Esophagus muscularis mucosa (tissue), 4 donors: ENCODE measurements at regions of chr19 and their contacts with region 1.

Region 1: DNA sequence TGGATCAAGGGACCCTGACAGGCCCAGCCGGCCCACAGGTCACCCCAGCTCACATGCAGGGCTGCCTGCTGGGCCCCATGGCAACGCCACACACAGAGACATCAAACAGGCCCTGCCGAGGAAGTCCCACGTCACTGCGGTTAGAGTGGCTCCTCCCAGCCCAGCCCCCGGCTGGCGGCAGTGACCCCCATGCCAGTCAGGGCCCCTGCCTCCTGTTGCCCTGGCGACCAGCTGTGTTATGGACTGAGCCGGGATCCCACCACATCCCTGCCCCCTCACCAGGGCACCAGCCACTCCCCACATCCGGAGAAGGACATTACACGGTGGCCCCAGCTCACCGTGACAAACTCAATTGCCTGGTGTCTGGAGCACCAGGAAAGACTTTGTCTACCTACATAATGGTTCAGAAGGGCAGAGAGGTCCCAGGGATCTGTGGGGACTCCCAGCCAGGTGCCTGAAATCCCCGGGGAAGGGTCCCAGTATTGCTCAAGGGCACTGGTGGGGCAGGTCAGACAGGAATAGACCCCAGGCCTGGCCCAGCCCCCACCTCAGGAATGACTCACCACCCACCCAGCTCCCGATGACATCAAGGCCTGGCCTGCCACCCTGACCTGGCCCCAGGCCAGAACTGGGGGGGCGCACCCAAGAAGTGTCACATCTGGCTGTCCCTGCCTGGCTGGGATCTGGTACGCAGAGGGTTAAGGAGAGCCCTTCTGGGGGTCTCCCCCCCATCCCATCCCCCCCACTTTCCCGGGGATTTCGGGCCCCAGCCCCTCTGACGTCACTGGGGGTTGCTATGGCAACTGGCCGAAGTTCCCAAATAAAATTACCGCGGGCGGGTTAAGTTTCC is 30.2 kb upstream of the NANOS3 start:
- DNase-seq: peak; percentile 98
- H3K4me3 ChIP-seq: peak overlapping the region; percentile 62 to 71 (median 64)
- H3K27ac ChIP-seq: peak overlapping the region; percentile 99 to 100 (median 100)
- H3K4me1 ChIP-seq: peaks cover 74 to 88% (median 83%) of the 10 kb centered on the region in 4 donors
- H3K27me3 ChIP-seq: no peaks in the 10 kb centered on the region
- CTCF ChIP-seq: no peak
- EP300 ChIP-seq: peak; percentile 2
- POLR2A ChIP-seq: no peak

Region 2: DNA sequence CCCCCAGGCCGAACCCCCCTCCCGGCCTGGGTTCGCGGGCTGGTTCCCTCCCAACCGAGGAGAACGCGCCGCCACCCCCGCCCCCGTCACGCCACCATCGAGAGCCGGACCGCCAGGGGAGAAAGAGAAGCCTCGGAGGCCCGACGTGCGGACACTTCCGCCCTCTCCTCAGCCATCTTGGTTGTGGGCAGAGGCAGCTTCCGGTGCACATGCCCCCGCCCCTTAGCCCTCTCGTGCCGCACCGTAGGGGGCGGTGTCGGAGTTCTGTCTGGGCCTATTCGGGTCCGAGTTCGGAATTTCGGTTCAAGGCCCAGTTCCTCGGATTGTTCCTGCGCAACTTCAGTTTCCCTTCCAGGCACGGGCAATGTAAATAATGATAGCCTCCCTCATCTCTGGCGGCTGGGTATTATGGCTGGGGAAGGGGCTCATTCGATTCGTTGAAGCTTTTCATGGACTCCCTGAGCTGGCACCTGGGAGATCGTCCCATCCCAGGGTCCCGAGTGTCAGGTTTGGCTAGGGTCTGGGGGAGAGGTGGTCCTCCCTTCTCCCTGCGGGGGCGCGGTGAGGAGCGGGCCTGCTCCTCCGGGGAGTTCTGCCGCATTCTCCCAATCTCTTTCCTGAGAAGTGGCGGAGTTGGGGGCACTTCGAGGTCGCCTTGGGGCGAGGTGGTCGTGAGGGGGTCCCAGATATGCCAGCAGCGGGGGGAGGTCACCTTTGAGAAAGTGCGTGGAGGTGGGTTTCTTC is 696.4 kb before region 1 on chr19 and contains the starts of genes IER2 and STX10:
- intact Hi-C with region 1: loop called (anchors 10 kb)
- DNase-seq: peak; percentile 99
- H3K4me3 ChIP-seq: peak within 1 kb of the TSS; percentile 70 to 95 (median 94)
- H3K27ac ChIP-seq: peak within 1 kb of the TSS; percentile 95 to 100 (median 98)
- H3K4me1 ChIP-seq: peaks cover 10 to 57% (median 40%) of the 10 kb centered on the region in 4 donors
- H3K27me3 ChIP-seq: no peaks in the 10 kb centered on the region
- CTCF ChIP-seq: peak; percentile 58 to 75 (median 62)
- EP300 ChIP-seq: no peak
- POLR2A ChIP-seq: peak; percentile 66
- total RNA-seq, gene IER2: 29.1 to 144 (median 62.3) TPM
- total RNA-seq, gene STX10: 50.2 to 62.6 (median 56.6) TPM

Region 3: DNA sequence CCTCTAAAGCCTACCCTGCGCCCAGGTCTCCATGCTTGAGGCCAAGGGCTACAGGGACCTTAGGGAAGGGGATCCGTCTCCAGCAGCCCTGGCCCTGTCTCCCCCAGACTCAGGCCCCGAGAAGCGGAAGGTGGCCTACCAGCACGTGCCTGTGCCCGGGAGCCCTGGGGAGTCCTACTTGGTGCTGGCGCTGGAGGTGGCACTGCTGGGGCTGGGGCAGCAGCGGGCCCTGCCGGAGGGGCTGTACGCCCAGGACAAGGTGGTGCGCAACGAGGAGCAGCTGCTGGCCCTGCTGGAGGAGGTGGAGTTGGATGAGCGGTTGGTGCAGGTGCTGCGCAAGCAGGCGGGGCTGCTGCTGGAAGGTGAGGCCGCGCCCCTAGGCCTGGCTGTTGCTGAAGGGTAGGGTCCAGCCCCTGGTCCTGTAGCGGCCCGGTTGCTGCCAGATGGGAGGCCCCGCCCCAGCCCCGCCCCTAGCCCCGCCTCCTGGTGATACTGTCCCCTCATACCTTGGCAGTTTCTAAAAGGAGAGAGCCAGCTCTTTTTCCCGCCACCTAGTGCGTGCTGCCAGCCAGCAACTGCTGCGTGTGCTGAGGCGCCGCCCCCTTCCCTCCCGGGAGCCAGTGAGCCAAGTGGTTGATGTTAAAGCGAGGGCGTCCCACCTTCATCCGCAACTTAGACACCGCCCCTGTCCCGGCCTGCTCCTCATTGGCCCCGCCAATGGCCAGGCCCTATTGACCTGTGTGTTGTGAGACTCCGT is 29.0 kb before region 1 on chr19:
- intact Hi-C with region 1: no loop called
- DNase-seq: no peak
- H3K4me3 ChIP-seq: peak overlapping the region; percentile 6 to 25 (median 20)
- H3K27ac ChIP-seq: peak overlapping the region in 1 of 4 donors; percentile 26
- H3K4me1 ChIP-seq: peaks cover 3 to 29% (median 25%) of the 10 kb centered on the region in 4 donors
- H3K27me3 ChIP-seq: no peaks in the 10 kb centered on the region
- CTCF ChIP-seq: no peak
- EP300 ChIP-seq: no peak
- POLR2A ChIP-seq: no peak